AG04449 (cell line): ENCODE measurements at regions of chrX and their contacts with region 1.

Region 1: GRCh38 chrX:115147220-115147619 is 42.0 kb upstream of the RBMXL3 start:
- DNase-seq: no peak
- H3K4me3 ChIP-seq: no peak overlapping the region
- CTCF ChIP-seq: peak; percentile 20

Region 2: GRCh38 chrX:114611018-114611619 is 536.1 kb before region 1 on chrX:
- CTCF ChIA-PET with region 1: interaction called, 16 read pairs
- POLR2A ChIA-PET with region 1: no interaction called
- DNase-seq: no peak
- H3K4me3 ChIP-seq: no peak overlapping the region
- CTCF ChIP-seq: peak; percentile 58